CD14-positive monocyte (primary cell): ENCODE measurements at regions of chr11 and their contacts with region 1.

Region 1: GRCh38 chr11:57741132-57742086 is at the start of gene SELENOH:
- DNase-seq: peak; percentile 90 to 93 (median 90)
- H3K4me3 ChIP-seq: peak within 1 kb of the TSS; percentile 89 to 98 (median 94)
- H3K4me3 Mint-ChIP-seq: peak within 1 kb of the TSS; percentile 96 to 99
- H3K27ac ChIP-seq: peak within 1 kb of the TSS; percentile 87 to 94
- H3K27ac Mint-ChIP-seq: peak within 1 kb of the TSS; percentile 92 to 97 (median 94)
- H3K4me1 ChIP-seq: peaks cover 15 to 17% of the 10 kb centered on the region in 2 donors
- H3K4me1 Mint-ChIP-seq: peaks cover 14% of the 10 kb centered on the region
- H3K27me3 ChIP-seq: no peaks in the 10 kb centered on the region
- H3K27me3 Mint-ChIP-seq: no peaks in the 10 kb centered on the region
- CTCF ChIP-seq: no peak
- polyA plus RNA-seq, gene SELENOH: 99.5 to 260 (median 206) TPM

Region 2: DNA sequence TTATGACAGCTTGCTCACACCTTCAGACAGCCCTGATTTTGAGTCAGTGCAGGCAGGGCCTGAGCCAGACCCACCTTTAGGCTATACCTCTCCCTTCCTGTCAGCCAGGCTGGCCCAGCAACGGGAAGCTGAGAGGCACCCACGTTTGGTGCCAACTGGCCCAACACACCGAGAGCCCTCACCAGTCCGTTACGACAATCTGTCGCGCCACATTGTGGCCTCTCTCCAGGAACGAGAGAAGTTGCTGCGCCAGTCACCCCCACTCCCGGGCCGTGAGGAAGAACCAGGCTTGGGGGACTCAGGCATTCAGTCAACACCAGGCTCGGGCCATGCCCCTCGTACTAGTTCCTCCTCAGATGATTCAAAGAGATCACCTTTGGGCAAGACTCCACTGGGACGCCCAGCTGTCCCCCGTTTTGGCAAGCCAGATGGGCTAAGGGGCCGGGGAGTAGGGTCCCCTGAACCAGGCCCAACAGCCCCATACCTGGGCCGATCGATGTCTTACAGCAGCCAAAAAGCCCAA is 42.5 kb before region 1 on chr11:
- intact Hi-C with region 1: no loop called
- DNase-seq: no peak
- H3K4me3 ChIP-seq: no peak overlapping the region
- H3K4me3 Mint-ChIP-seq: no peak overlapping the region
- H3K27ac ChIP-seq: no peak overlapping the region
- H3K27ac Mint-ChIP-seq: peak overlapping the region in 1 of 7 donors; percentile 4
- H3K4me1 ChIP-seq: no peaks in the 10 kb centered on the region
- H3K4me1 Mint-ChIP-seq: no peaks in the 10 kb centered on the region
- H3K27me3 ChIP-seq: no peaks in the 10 kb centered on the region
- H3K27me3 Mint-ChIP-seq: peaks cover 0 to 2% (median 0%) of the 10 kb centered on the region in 3 donors
- CTCF ChIP-seq: no peak

Region 3: DNA sequence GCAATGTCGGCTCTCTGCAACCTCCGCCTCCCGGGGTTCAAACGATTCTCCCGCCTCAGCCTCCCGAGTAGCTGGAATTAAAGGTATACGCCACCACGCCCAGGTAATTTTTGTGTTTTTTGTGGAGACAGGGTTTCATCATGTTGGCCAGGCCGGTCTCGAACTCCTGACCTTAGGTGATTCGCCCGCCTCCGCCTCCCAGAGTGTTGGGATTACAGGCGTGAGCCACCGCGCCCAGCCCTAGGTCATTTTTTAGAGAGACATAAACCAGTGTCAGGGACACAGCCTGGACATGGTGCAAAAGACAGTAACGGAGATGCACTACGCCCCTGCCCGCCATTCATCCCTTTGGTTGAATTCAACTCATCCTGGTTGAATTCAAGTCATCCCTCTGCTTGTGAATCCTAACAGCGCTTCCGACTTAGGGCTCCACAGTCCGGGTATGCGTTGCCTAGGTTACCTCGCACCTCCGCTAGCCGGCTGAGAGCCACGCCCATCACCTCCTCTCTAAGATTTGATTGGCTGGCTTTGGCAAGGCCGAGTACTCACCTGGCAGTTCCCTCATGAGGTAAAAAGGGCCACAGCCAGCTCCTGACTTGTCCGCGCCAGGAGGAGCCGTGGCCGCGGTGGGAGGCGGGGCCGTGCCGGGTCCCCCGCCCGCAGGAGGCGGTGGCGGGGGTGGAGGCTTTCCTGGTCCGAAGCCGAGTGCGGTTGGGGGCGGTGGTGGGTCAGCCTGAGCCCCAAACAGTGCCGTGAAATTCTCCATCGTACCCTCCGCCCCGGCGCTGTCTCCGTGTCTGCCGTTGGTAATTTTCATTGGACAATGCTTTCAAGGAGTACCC is 29.8 kb before region 1 on chr11 and contains the start of gene MED19:
- intact Hi-C with region 1: no loop called
- DNase-seq: peak; percentile 38 to 67 (median 41)
- H3K4me3 ChIP-seq: peak within 1 kb of the TSS; percentile 72 to 100 (median 96)
- H3K4me3 Mint-ChIP-seq: peak within 1 kb of the TSS; percentile 98
- H3K27ac ChIP-seq: peak within 1 kb of the TSS; percentile 72 to 97
- H3K27ac Mint-ChIP-seq: peak within 1 kb of the TSS; percentile 95 to 99 (median 98)
- H3K4me1 ChIP-seq: peaks cover 22 to 31% of the 10 kb centered on the region in 2 donors
- H3K4me1 Mint-ChIP-seq: peaks cover 32% of the 10 kb centered on the region
- H3K27me3 ChIP-seq: no peaks in the 10 kb centered on the region
- H3K27me3 Mint-ChIP-seq: peaks cover 0 to 2% (median 2%) of the 10 kb centered on the region in 3 donors
- CTCF ChIP-seq: no peak
- polyA plus RNA-seq, gene MED19: 7.1 to 11.3 (median 9.2) TPM

Region 4: GRCh38 chr11:57792060-57792541 is 50.7 kb after region 1 on chr11:
- intact Hi-C with region 1: loop called in 1 of 2 experiments (anchors 2 kb)
- DNase-seq: peak; percentile 98 to 99 (median 99)
- H3K4me3 ChIP-seq: peak overlapping the region; percentile 25 to 66 (median 26)
- H3K4me3 Mint-ChIP-seq: peak overlapping the region in 1 of 2 donors; percentile 89
- H3K27ac ChIP-seq: peak overlapping the region; percentile 87 to 94
- H3K27ac Mint-ChIP-seq: peak overlapping the region; percentile 97 to 99 (median 98)
- H3K4me1 ChIP-seq: peaks cover 53 to 71% of the 10 kb centered on the region in 2 donors
- H3K4me1 Mint-ChIP-seq: peaks cover 63% of the 10 kb centered on the region
- H3K27me3 ChIP-seq: no peaks in the 10 kb centered on the region
- H3K27me3 Mint-ChIP-seq: peaks cover 0 to 3% (median 3%) of the 10 kb centered on the region in 3 donors
- CTCF ChIP-seq: no peak